Activated T-helper 1 cell treated with anti-CD3 and anti-CD28 coated beads, Interleukin-12 subunit alpha, Interleukin-12 subunit beta, Interleukin-2, Interleukin-4 antibody, amounts not matched to agents 30 ng/mL and 10 ng/mL and 1 ng/mL, durations not matched to agents 14 hours and 24 hours and 36 hours (primary cell): ENCODE measurements at regions of chr1 and their contacts with region 1.

Region 1: DNA sequence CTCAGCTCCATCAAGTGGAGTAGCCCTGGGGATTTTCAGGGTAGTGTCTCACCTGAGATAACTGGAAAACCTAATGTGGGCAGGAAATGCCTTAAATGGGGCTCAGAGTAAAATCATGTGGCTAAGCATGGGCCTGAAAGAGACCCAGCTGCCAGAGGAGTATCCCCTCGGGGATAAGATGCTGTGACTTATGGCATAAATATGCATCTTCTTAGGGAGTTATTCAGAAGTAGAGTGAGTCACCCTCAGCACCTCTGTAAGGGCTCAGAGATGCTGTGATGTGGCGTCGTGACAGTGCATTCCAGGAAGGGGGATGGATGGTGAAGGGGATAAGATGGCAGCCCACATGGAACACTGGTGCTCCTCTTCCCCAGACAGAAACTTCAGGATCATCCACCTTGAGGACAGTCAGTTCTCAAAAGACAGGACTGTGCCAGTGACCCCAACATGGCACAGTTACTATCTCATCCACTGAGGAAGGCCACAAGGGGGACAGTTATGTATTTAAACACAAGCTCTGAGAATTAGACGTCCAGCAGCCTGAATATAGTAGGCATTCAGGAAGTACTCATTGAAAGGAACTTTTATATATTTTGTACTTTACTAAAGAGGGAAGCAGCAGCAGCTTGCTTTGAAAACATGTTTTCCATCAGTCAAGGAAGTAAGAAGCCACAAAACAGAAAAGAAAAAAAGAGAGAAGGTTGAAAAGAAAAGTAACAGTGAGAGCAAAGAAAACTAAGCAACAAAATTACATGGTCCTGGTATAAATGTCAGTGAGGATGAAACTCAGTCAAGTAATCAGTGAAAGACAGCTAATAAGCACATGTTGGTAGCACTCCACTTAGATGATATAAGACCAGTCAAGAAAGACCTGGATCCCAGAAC is 8.3 kb downstream of the IL24 start:
- DNase-seq: no peak
- H3K4me3 Mint-ChIP-seq: peak overlapping the region; percentile 48
- H3K27ac Mint-ChIP-seq: peak overlapping the region; percentile 69
- H3K4me1 Mint-ChIP-seq: peaks cover 62% of the 10 kb centered on the region
- H3K27me3 Mint-ChIP-seq: no peaks in the 10 kb centered on the region

Region 2: DNA sequence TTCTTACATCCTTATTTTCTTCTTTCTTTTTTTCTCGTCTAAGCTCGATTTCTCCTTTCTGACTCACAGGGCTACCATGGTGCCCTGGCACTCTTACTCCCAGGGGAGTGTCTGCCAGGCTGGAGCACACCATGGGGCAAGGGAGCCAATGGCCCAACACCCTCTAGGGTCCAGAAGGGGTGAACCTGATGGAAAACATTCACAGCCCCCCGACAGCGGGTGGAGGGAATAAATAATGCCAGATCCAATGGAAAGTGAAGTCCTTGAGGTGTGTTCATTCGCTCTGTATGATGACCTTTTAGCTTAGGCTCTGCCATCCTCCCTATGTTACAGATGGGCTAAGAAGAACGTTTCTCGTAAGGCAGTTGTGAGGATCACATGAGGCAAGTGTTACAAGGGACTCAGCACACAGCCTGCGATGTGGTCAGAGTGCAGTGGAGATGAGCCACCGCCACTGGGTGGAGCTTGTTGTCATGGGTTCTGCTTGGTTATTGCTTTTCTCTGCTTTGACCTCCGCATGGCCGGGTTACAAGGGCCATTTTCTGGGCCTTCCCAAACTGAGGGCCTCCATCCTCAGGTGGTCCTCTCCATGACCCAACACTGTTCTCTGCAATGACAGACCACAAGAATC is 19.7 kb after region 1 on chr1:
- intact Hi-C with region 1: loop called (anchors 2 kb)
- DNase-seq: peak; percentile 36
- H3K4me3 Mint-ChIP-seq: no peak overlapping the region
- H3K27ac Mint-ChIP-seq: no peak overlapping the region
- H3K4me1 Mint-ChIP-seq: peaks cover 13% of the 10 kb centered on the region
- H3K27me3 Mint-ChIP-seq: no peaks in the 10 kb centered on the region